ENCODE measurements at regions of chr6 and their contacts with region 1.

Region 1: DNA sequence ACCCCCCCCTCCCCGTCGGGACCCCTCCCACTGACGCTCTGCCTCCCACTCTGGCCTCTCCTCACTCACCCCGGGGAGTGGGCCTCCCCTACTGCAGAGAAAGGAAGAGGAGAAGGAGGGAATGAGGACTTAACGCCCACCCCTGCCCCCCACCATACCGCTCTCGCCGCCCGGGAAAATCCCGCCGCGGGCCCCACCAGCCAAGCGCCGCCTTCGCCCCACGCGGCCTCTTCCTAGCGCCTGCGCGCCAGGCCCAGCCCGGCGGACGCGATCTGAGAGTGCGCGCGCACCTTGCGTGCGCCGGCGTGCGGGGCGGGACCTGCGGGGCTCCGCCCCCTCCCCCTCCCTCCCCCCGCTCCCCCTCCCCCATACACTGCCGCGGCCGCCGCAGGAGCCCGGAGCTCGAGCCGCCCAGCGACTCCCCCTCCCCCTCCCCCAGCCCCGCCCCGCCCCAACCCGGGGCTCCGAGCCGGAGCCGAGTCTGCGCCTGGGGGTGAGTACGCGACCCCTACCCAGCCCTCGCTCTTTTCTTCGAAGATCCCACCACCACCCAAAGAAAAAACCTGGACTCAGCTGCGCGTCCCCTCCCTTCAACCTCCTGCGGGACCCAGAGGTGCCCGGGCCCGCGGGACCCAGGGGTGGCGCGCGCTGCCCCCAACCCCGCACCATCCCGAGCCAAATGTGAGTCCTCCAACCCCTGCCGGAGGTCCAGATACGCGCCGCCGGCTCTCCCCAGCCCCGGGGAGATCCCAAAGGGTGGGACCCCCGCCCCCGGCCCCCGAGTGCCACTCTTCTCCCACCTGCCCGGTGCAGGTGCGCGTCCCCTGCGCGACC is at the starts of genes MRPL14 and TMEM63B:
- DNase-seq: peak; percentile 81 to 96 (median 88)
- ATAC-seq: peak; percentile 88
- H3K4me3 ChIP-seq: peak within 1 kb of the TSS; percentile 85 to 91
- H3K4me3 Mint-ChIP-seq: peak within 1 kb of the TSS; percentile 94
- H3K27ac ChIP-seq: peak within 1 kb of the TSS; percentile 65 to 82
- H3K27ac Mint-ChIP-seq: peak within 1 kb of the TSS; percentile 96
- H3K4me1 ChIP-seq: peaks cover 50% of the 10 kb centered on the region
- H3K4me1 Mint-ChIP-seq: peaks cover 55% of the 10 kb centered on the region
- H3K27me3 ChIP-seq: no peaks in the 10 kb centered on the region
- H3K27me3 Mint-ChIP-seq: no peaks in the 10 kb centered on the region
- CTCF ChIP-seq: no peak
- total RNA-seq, gene MRPL14: 10.3 to 10.5 TPM
- total RNA-seq, gene TMEM63B: 14.1 to 19.0 TPM

Region 2: DNA sequence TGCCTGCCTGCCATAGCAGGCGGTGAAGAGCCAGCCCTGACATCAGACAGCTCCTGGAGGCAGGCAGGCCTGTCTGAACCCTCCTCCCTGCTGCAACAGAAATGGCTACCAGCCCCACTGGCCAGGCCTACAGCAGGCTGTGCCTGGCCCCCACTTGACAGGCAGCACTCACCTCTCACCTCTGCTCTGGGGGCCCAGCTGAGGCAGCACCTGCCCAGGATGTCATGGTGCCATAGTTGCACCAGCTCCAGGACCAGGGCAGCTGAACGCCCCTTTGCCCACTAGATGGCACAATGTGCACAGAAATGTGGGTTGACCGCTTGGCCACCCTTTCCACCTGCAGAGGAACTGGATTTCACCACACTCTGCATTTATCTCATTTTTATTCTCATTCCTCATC is 30.8 kb before region 1 on chr6:
- CTCF ChIA-PET with region 1: interaction called, 5 read pairs
- POLR2A ChIA-PET with region 1: interaction called, 3 read pairs
- intact Hi-C with region 1: loop called in 1 of 2 experiments (anchors 1 kb)
- DNase-seq: peak; percentile 61 to 86 (median 77)
- ATAC-seq: peak; percentile 97
- H3K4me3 ChIP-seq: no peak overlapping the region
- H3K4me3 Mint-ChIP-seq: no peak overlapping the region
- H3K27ac ChIP-seq: no peak overlapping the region
- H3K27ac Mint-ChIP-seq: no peak overlapping the region
- H3K4me1 ChIP-seq: no peaks in the 10 kb centered on the region
- H3K4me1 Mint-ChIP-seq: peaks cover 3% of the 10 kb centered on the region
- H3K27me3 ChIP-seq: no peaks in the 10 kb centered on the region
- H3K27me3 Mint-ChIP-seq: no peaks in the 10 kb centered on the region
- CTCF ChIP-seq: peak; percentile 84

Region 3: DNA sequence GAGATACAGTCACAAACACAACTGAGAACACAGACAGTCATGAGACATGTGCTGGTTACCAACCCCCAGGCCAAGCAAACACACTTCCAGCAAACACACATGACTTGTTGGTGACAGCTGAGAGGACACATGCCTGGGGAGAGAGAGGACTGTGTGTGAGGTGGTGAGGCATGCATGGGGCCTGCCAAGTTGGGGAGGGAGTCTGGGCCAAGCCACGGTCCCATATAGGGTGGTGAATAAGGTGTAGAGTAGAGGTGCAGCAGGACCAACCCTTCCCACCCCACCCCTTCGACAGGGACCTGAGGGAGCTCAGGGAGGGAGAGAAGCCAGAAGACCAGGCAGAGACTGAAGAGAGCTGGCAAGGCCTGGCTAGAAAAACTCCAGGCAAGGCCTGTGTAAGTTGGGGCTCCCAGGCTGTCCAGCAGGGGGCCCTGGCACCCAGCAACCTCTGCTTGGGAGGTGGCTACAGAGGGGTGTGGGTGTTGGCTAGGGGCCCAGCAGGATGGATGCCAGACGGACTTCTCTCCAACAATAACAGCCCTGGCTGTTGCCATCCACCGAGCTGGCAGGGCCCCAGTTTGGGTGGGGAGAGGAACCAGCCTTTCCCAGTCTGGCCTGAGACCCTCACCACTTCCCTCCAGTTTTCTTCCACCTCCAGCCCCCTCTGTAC is 94.0 kb after region 1 on chr6:
- CTCF ChIA-PET with region 1: no interaction called
- POLR2A ChIA-PET with region 1: interaction called, 6 read pairs
- intact Hi-C with region 1: loop called (anchors 2 to 5 kb)
- DNase-seq: peak; percentile 53 to 85 (median 72)
- ATAC-seq: peak; percentile 60
- H3K4me3 ChIP-seq: no peak overlapping the region
- H3K4me3 Mint-ChIP-seq: no peak overlapping the region
- H3K27ac ChIP-seq: no peak overlapping the region
- H3K27ac Mint-ChIP-seq: no peak overlapping the region
- H3K4me1 ChIP-seq: peaks cover 28% of the 10 kb centered on the region
- H3K4me1 Mint-ChIP-seq: peaks cover 41% of the 10 kb centered on the region
- H3K27me3 ChIP-seq: peaks cover 0 to 8% of the 10 kb centered on the region in 2 experiments
- H3K27me3 Mint-ChIP-seq: peaks cover 3% of the 10 kb centered on the region
- CTCF ChIP-seq: peak; percentile 47

Region 4: DNA sequence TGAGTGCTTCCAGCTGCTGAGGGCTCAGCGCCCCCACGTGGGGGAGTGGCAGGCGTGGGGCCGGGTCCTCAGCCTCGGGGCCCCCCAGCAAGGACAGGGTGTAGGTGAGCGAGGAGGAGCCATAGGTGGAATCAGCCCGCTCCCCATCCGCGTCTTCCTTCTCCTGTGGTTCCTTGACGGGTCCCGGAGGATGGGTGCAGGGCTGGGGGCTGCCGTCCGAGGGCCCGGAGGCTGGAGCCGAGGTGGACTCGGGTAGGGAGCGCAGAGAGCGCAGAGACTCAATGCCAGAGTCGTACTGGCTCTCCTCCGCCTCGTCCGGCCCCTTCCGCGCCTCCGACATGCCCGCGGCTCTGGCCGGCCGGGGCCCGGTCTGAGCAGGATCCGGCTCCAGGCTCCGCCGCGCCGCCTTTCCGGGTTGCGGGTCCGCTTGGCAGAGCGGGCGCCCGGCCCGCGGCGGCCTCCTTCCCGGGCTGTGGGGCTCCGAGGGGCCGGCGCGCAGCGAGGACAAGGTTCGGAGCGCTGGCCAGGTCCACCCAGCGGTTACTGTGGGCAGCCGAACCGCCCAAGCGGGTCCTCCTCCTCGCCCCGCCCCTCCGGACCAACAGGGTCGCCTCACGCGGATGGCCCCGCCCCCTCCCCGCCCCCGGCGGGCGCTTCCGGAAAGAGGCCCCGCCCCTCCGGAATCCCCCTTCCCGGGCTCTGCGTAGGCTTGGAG is 137.8 kb after region 1 on chr6 and contains the start of gene NFKBIE:
- CTCF ChIA-PET with region 1: no interaction called
- POLR2A ChIA-PET with region 1: interaction called, 3 read pairs
- intact Hi-C with region 1: loop called in 1 of 2 experiments (anchors 2 kb)
- DNase-seq: peak; percentile 87 to 96 (median 94)
- ATAC-seq: peak; percentile 82
- H3K4me3 ChIP-seq: peak within 1 kb of the TSS; percentile 90 to 91
- H3K4me3 Mint-ChIP-seq: peak within 1 kb of the TSS; percentile 83
- H3K27ac ChIP-seq: peak within 1 kb of the TSS; percentile 78 to 89
- H3K27ac Mint-ChIP-seq: peak within 1 kb of the TSS; percentile 85
- H3K4me1 ChIP-seq: peaks cover 31% of the 10 kb centered on the region
- H3K4me1 Mint-ChIP-seq: peaks cover 46% of the 10 kb centered on the region
- H3K27me3 ChIP-seq: peaks cover 0 to 8% of the 10 kb centered on the region in 2 experiments
- H3K27me3 Mint-ChIP-seq: peaks cover 8% of the 10 kb centered on the region
- CTCF ChIP-seq: peak; percentile 44
- total RNA-seq, gene NFKBIE: 44.5 to 45.8 TPM

Region 5: DNA sequence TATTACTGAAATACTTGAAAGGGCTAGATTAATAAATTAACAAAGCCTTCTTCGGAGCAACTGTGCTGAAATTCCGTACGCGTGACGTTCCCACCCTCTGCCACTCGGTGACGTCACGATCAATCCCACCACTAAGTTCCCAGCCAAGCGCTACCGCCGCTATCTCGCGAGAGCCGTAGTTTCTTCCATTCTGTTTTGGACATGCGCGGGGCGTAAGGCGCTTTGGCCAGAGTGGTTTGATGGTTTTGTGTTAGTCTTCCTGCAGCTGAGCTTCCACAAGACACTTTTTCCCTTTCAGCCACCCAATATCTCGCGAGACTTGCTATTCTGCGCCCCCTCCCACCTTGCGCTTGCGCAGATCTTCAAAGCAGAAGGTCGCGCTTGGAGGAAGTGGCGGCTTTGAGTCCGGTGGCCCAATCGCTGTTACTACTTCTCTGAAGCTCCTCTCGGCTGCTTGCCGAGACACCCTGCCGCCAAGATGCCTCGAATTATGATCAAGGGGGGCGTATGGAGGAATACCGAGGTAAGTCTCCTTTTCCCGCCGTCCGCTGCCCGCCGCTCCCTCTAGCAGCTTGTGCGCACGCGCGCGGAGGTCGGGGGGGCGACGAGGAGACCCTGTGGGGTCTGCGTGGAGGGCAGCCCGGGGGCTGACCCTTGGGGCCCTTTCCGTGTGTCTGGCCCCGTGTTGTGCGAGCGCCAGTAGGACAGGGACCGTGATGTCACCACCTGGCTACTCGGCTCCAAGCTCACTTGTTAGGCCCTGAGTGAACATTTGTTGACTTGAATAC is 260.1 kb after region 1 on chr6 and contains the start of gene CDC5L:
- CTCF ChIA-PET with region 1: no interaction called
- POLR2A ChIA-PET with region 1: no interaction called
- intact Hi-C with region 1: loop called in 1 of 2 experiments (anchors 1 kb)
- DNase-seq: peak; percentile 78 to 99 (median 89)
- ATAC-seq: peak; percentile 83
- H3K4me3 ChIP-seq: peak within 1 kb of the TSS; percentile 67 to 96
- H3K4me3 Mint-ChIP-seq: peak within 1 kb of the TSS; percentile 98
- H3K27ac ChIP-seq: peak within 1 kb of the TSS; percentile 73 to 96
- H3K27ac Mint-ChIP-seq: peak within 1 kb of the TSS; percentile 98
- H3K4me1 ChIP-seq: peaks cover 24% of the 10 kb centered on the region
- H3K4me1 Mint-ChIP-seq: peaks cover 42% of the 10 kb centered on the region
- H3K27me3 ChIP-seq: no peaks in the 10 kb centered on the region
- H3K27me3 Mint-ChIP-seq: no peaks in the 10 kb centered on the region
- CTCF ChIP-seq: no peak
- total RNA-seq, gene CDC5L: 24.1 to 24.4 TPM

Measured in CD8-positive, alpha-beta T cell (primary cell).